ENCODE measurements at regions of chr7 and their contacts with region 1.

Region 1: GRCh38 chr7:149783386-149784250 is 10.2 kb upstream of the ZNF467 start:
- DNase-seq: no peak
- CTCF ChIP-seq: no peak

Region 2: GRCh38 chr7:149799397-149800171 is 16.0 kb after region 1 on chr7:
- CTCF ChIA-PET with region 1: interaction called, 10 read pairs
- POLR2A ChIA-PET with region 1: no interaction called
- DNase-seq: peak; percentile 74
- CTCF ChIP-seq: peak; percentile 63